ENCODE measurements at regions of chr19 and their contacts with region 1.

Region 1: GRCh38 chr19:3984908-3985642 is at the start of gene EEF2:
- DNase-seq: peak; percentile 92
- ATAC-seq: peak; percentile 49
- H3K4me3 Mint-ChIP-seq: peak within 1 kb of the TSS; percentile 98
- H3K27ac Mint-ChIP-seq: peak within 1 kb of the TSS; percentile 97
- H3K4me1 Mint-ChIP-seq: peaks cover 52% of the 10 kb centered on the region
- H3K27me3 Mint-ChIP-seq: no peaks in the 10 kb centered on the region
- total RNA-seq, gene EEF2: 1,382 to 1,952 TPM

Region 2: GRCh38 chr19:3970808-3971598 is 14.1 kb before region 1 on chr19 and contains the start of gene DAPK3:
- CTCF ChIA-PET with region 1: interaction called, 17 read pairs
- DNase-seq: peak; percentile 96
- ATAC-seq: peak; percentile 93
- H3K4me3 Mint-ChIP-seq: peak within 1 kb of the TSS; percentile 86
- H3K27ac Mint-ChIP-seq: peak within 1 kb of the TSS; percentile 85
- H3K4me1 Mint-ChIP-seq: peaks cover 25% of the 10 kb centered on the region
- H3K27me3 Mint-ChIP-seq: no peaks in the 10 kb centered on the region
- total RNA-seq, gene DAPK3: 49.3 to 53.0 TPM

Region 3: GRCh38 chr19:3995627-3996026 is 10.6 kb after region 1 on chr19:
- CTCF ChIA-PET with region 1: interaction called, 70 read pairs
- DNase-seq: no peak
- ATAC-seq: no peak
- H3K4me3 Mint-ChIP-seq: no peak overlapping the region
- H3K27ac Mint-ChIP-seq: no peak overlapping the region
- H3K4me1 Mint-ChIP-seq: peaks cover 5% of the 10 kb centered on the region
- H3K27me3 Mint-ChIP-seq: no peaks in the 10 kb centered on the region

Region 4: GRCh38 chr19:4007021-4007835 is 22.2 kb after region 1 on chr19 and contains the start of gene PIAS4:
- CTCF ChIA-PET with region 1: interaction called, 70 read pairs
- DNase-seq: peak; percentile 96
- ATAC-seq: peak; percentile 94
- H3K4me3 Mint-ChIP-seq: peak within 1 kb of the TSS; percentile 79
- H3K27ac Mint-ChIP-seq: peak within 1 kb of the TSS; percentile 82
- H3K4me1 Mint-ChIP-seq: peaks cover 20% of the 10 kb centered on the region
- H3K27me3 Mint-ChIP-seq: no peaks in the 10 kb centered on the region
- total RNA-seq, gene PIAS4: 34.0 to 39.4 TPM

Region 5: DNA sequence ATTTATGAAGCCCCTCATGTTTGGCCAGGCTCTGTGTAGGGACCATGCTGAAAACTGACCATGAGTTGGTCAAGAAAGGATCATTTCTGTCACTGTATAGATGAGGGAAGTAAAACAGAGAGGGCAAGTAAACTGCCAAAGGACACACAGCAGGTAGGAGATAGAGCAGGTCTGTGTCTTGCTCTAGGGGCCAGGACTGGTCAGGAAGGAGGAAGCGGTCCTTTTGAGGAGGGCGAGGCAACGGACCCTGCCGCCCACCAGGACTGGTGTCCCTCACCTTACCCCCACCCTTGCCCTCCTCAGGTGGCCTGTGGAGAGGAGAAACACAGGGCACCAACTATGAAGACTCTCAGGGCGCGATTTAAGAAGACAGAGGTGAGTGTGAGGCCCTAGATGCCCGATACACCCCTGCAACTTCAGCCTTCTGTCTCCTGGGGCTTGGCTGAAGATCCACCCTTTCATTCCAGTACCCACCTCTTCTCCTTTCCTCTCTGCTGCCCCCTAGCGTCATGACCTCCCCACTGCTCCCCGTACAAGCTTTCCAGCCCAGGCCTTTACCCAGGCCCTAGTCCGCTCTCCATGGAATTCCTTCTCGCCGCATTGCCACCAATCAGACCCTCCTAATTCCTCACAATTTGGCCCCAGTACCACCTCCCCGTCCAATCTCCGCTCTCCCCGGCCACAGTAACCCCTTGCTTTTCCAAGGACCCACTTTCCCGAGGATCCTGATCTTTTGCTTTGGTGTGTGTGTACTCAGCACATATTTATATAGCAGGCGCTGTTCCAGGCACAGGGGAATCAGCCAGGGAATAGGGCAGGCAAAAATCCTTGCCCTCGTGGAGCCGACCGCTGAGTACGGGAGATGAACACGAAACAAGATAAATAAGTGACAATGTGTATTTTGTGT is 201.3 kb after region 1 on chr19:
- CTCF ChIA-PET with region 1: interaction called, 13 read pairs
- DNase-seq: peak; percentile 89
- ATAC-seq: peak; percentile 63
- H3K4me3 Mint-ChIP-seq: no peak overlapping the region
- H3K27ac Mint-ChIP-seq: no peak overlapping the region
- H3K4me1 Mint-ChIP-seq: peaks cover 19% of the 10 kb centered on the region
- H3K27me3 Mint-ChIP-seq: no peaks in the 10 kb centered on the region

Region 6: DNA sequence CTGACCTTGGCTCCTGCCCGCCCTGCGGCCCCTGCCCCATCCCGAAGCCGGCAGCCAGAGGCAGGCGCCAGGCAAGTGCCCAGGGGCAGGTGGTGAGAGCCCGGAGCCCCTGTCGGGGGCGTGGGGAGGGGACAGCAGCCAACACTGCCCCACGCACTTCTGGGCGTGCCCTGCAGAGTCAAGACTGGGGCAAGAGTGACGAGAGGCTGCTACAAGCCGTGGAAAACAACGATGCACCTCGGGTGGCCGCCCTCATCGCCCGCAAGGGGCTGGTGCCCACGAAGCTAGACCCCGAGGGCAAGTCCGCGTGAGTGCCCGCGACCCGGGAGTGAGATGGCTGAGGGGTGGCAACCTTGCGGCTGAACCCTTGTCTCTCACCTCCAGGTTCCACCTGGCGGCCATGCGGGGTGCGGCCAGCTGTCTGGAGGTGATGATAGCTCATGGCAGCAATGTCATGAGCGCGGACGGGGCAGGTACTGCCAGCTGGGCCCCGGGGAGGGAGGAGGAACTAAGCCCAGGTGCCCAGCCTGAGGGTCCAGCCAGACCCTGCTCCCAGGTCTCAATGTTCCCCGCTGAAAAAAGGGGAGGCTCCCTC is 214.7 kb after region 1 on chr19:
- CTCF ChIA-PET with region 1: interaction called, 15 read pairs
- DNase-seq: no peak
- ATAC-seq: no peak
- H3K4me3 Mint-ChIP-seq: no peak overlapping the region
- H3K27ac Mint-ChIP-seq: no peak overlapping the region
- H3K4me1 Mint-ChIP-seq: peaks cover 11% of the 10 kb centered on the region
- H3K27me3 Mint-ChIP-seq: peaks cover 28% of the 10 kb centered on the region

Region 7: DNA sequence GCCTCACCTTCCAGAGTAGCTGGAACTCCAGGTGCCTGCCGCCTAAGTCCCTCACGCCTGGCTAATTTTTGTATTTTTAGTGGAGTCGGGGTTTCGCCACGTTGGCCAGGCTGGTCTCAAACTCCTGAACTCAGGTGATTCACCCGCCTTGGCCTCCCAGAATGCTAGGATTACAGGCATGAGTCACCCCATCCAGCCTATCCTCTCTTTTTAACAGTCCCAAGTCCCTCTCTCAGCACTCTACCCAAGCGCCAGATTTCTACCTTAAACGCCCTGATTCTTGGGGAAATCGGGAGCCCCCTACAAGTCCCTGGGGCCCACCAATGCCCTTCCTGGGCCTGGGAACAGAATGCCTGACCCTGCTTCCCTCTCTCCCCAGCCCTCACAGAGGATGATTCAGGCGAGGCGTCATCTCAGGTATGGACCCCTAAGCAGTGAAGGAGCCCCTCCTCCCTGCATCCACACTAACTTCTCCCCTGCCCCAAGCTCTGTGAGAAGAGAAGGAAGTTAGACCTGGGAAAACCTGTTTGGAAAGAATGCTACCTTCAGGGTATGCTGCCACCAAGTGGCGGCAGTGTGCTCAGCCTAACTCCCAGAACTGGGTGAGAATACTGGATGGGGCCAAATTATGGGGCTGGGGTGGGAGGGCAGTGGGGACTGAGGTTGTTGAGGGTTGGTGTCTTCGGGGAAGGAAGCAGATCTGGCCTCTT is 223.5 kb after region 1 on chr19:
- CTCF ChIA-PET with region 1: interaction called, 15 read pairs
- DNase-seq: no peak
- ATAC-seq: no peak
- H3K4me3 Mint-ChIP-seq: no peak overlapping the region
- H3K27ac Mint-ChIP-seq: peak overlapping the region; percentile 46
- H3K4me1 Mint-ChIP-seq: peaks cover 3% of the 10 kb centered on the region
- H3K27me3 Mint-ChIP-seq: peaks cover 4% of the 10 kb centered on the region

Measured in activated CD8-positive, alpha-beta memory T cell treated with anti-CD3 and anti-CD28 coated beads, Interleukin-2, amount 10 ng/mL, durations not matched to agents 7 days and 5 days (primary cell).